H1 (cell line): ENCODE measurements at regions of chr22 and their contacts with region 1.

Region 1: DNA sequence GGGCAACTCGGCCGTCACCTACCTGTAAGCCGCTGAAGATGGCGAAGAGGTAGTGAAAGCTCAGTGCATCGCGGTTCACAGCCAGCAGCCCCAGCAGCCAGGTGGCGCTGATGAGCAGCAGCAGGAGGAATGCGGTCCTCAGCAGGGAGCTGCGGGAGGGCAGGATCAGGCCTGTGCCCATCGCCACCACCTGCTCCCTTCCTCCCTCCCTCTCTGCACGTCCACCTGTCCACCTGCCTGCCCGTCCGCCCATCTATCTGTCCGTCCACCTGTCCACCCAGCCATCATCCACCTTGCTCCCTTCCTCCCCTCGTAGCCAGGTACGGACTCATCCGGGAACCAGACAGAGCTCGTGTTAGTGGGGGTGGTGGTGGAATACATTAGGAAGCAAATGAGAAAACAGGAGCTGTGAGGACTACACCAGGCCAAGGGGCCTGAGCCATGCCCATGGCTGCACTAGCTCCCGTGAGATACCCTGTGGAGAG is 32.2 kb downstream of the TRMU start:
- DNase-seq: peak; percentile 61 to 96
- H3K4me3 ChIP-seq: no peak overlapping the region
- H3K27ac ChIP-seq: no peak overlapping the region
- H3K4me1 ChIP-seq: peaks cover 0 to 15% (median 6%) of the 10 kb centered on the region in 4 experiments; a peak in 5 of 7 replicates
- H3K27me3 ChIP-seq: no peaks in the 10 kb centered on the region
- CTCF ChIP-seq: peak; percentile 94 to 100 (median 100)
- EP300 ChIP-seq: peak in 1 of 2 experiments; percentile 49; a peak in 1 of 3 replicates
- POLR2A ChIP-seq: no peak
- RAD21 ChIP-seq: peak; percentile 85 to 88

Region 2: GRCh38 chr22:46233231-46233630 is 134.5 kb before region 1 on chr22:
- CTCF ChIA-PET with region 1: no interaction called
- POLR2A ChIA-PET with region 1: no interaction called
- DNase-seq: no peak
- H3K4me3 ChIP-seq: no peak overlapping the region
- H3K27ac ChIP-seq: no peak overlapping the region
- H3K4me1 ChIP-seq: no peaks in the 10 kb centered on the region
- H3K27me3 ChIP-seq: no peaks in the 10 kb centered on the region
- CTCF ChIP-seq: no peak
- EP300 ChIP-seq: no peak
- POLR2A ChIP-seq: no peak
- RAD21 ChIP-seq: no peak

Region 3: GRCh38 chr22:46296257-46297150 is 71.2 kb before region 1 on chr22 and contains the start of gene GTSE1:
- CTCF ChIA-PET with region 1: no interaction called
- POLR2A ChIA-PET with region 1: no interaction called
- DNase-seq: peak; percentile 93 to 96
- H3K4me3 ChIP-seq: peak within 1 kb of the TSS; percentile 60 to 87 (median 76)
- H3K27ac ChIP-seq: no peak within 1 kb of the TSS; the same call in 1 of the 2 replicates
- H3K4me1 ChIP-seq: peaks cover 4 to 11% (median 5%) of the 10 kb centered on the region in 4 experiments; a peak in 4 of 7 replicates
- H3K27me3 ChIP-seq: no peaks in the 10 kb centered on the region
- CTCF ChIP-seq: peak in 2 of 3 experiments; percentile 1 to 7; a peak in 2 of 4 replicates
- EP300 ChIP-seq: no peak
- POLR2A ChIP-seq: no peak
- RAD21 ChIP-seq: peak; percentile 25 to 32; a peak in 3 of 4 replicates
- total RNA-seq, gene GTSE1: 38.6 and 40.6 TPM in 2 replicates

Region 4: DNA sequence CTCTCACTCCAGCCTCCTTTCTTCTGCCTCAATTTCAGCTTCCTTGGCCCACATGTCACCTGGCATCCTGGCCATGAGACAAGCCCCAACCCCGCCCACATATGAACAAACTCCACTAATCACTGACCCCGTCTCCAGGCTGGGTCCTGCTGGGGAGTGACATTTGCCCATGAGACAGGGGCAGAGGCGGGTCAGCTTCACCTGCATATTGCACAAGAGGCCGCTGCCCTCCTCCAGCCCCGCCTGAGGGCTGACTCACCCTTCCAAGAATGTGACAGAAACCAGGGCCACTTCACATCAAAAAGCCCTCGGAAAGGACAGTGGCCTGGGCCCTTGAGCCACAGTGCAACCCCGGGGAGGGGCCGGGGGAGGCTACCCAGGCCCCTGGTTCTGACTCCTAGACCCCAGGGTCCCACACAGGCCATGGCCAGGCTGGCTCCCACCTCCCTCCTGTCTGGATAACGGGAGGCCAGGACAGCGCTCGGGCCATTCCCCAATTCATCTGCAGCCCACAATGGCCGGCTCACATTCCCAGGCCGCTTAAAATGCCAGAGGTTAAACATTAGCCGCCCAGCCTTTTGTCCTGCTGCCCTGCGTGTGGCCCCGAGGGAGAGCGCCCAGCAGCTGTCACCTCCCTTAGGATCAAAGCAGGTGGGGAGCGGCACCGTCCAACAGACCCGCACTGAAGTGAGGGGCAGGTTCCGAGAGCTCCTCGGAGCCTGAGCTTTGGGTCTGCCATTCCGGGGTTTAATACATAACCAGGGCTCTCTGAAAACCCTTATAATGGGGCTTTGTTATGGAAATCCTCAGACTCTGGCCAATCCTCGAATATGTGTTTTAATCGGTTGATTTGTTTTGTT is 10.0 kb after region 1 on chr22:
- CTCF ChIA-PET with region 1: interaction called, 16 read pairs
- POLR2A ChIA-PET with region 1: no interaction called
- DNase-seq: peak; percentile 27 to 73
- H3K4me3 ChIP-seq: peak overlapping the region in 1 of 4 experiments; percentile 38; a peak in 4 of 8 replicates
- H3K27ac ChIP-seq: 0 out of 2 replicates have a peak overlapping the region, but pooled peaks have one; percentile 14
- H3K4me1 ChIP-seq: peaks cover 0 to 30% (median 27%) of the 10 kb centered on the region in 4 experiments; a peak in 6 of 7 replicates
- H3K27me3 ChIP-seq: no peaks in the 10 kb centered on the region
- CTCF ChIP-seq: no peak
- EP300 ChIP-seq: no peak
- POLR2A ChIP-seq: no peak
- RAD21 ChIP-seq: 0 out of 4 replicates have a peak, but pooled peaks of 1 of the 2 experiments have one; percentile 4

Region 5: DNA sequence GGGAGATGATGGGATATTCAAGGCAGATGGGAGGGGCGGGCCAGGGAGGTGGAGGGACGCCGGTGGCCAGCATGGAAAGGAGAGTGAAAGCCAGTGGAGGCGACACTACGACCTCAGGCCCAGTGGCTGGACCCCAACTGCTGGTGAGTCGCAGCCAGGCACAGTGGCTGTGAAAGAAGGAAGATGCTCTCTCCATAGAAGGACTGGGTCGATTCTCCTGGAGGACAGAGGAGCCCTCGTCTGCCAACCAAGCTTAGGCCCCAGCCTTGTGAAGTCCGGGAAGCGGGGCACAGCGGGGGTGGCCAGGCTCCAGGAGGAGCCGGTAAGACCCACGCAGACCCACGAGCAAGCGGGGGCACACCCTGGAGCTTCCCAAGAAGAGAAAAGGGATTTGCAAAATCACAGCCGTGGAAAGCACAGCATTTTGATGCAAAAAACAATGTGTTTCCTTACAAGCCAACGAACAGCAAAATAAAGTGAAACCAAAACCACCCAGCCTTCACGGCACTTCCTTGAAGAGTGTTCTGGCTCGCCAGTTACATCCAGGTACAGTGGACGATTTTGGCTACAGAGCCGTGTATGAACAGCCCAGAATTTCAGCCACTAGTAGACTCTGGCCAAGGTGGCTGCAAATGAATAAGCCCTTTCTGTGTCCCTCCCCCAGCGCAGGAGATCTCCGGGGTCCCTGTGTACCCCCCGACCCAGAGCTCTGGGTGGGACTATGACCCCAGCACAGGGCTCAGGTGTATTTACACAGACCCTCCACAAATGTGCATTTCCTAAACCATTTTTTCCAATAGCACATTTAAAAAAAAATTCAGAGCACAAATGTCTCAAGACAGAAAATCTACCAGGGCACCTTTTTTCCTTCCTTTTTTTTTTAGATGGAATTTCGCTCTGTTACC is 64.7 kb after region 1 on chr22:
- CTCF ChIA-PET with region 1: interaction called, 14 read pairs
- POLR2A ChIA-PET with region 1: no interaction called
- DNase-seq: peak in 1 of 2 experiments; percentile 43
- H3K4me3 ChIP-seq: no peak overlapping the region
- H3K27ac ChIP-seq: no peak overlapping the region; the same call in 1 of the 2 replicates
- H3K4me1 ChIP-seq: no peaks in the 10 kb centered on the region
- H3K27me3 ChIP-seq: no peaks in the 10 kb centered on the region
- CTCF ChIP-seq: no peak
- EP300 ChIP-seq: no peak
- POLR2A ChIP-seq: no peak
- RAD21 ChIP-seq: no peak

Region 6: DNA sequence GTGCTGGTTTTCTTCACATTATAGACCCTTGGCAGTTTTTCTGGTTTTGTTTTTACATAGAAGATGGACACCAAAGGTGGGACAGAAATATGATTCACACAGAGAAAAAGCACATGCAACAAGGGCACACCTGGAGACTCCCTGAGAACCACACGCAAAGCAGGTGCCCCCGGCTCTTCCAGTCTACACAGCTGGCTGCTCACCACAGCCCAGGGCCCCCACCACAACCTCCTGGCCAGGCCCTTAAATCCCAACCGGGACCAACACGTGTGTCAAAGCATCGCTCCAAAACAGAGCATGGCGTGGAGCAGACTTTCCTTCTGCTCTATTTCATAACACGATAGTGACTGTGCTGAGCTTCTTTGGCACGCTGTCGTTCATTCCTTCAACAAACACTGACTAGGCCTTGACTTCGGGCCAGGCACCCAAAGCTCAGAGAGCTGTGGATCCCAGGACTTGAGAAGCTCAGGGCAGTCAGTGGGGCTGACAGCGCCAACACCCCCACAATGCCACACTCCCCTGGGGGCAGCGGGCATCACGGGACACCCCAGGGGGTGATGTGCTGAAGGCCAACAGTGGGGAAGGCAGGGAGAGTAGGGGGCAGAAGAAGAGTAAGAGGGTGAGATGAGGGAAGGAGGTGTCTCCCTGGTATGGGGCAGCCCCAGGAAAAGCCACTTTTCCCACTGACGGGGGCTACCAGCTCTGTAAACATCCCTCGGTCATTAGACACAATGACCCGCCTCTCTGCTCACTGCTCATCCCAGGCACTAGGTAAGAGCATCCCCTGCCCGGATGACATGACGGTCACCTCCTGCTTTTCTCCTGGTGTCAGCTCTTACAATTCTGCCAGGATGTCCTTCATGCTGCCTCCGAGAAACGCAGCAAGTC is 143.6 kb after region 1 on chr22:
- CTCF ChIA-PET with region 1: interaction called, 10 read pairs
- POLR2A ChIA-PET with region 1: no interaction called
- DNase-seq: no peak
- H3K4me3 ChIP-seq: no peak overlapping the region
- H3K27ac ChIP-seq: no peak overlapping the region
- H3K4me1 ChIP-seq: peaks cover 0 to 36% (median 21%) of the 10 kb centered on the region in 4 experiments; a peak in 6 of 7 replicates
- H3K27me3 ChIP-seq: no peaks in the 10 kb centered on the region
- CTCF ChIP-seq: no peak
- EP300 ChIP-seq: no peak
- POLR2A ChIP-seq: no peak
- RAD21 ChIP-seq: no peak

Region 7: DNA sequence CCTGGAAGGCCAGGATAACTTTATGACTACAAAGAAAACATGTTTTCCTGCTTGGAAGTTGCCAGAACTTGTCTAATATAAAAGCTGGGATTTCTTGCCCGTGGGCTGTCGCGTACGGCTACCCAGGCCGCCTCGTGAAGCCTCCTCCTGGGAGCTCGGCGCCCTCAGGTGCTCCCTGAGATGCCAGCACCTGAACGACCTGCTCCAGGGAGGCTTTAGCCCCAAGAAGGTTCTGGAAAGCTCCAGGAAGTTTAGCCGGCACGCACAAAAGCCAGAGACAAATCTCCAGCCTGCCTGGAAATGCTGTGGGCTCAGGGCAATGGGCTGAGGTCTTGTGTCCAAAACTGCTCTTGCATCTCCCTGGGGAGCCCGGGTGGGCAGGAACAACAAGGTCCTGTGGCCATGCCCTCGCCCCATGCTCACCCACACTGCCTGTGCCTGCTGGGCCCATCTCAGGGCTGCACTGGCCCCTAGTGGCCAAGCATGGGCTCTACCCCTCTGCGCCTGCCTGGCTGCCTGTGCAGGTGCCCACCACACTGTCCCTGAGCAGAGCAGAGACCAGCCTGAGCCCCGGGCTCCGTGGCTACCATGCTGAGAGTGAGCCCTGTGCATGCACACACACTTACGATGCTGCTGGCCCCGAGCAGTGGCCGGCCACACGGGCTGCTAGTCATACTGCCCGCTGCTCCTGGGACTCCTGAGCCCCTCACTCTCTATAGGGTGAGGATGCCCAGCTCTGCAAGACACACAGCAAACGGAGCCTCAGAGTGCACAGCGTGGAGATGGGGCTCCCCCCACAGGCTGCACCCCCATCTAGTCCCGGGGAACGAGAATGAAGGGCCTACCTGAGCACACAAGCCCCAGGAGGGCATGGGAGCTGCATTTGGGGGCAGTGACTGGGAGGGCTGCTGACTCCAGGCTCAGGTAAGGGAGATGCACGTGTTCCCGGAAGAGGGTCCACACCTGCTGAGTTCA is 174.5 kb after region 1 on chr22:
- CTCF ChIA-PET with region 1: interaction called, 82 read pairs
- POLR2A ChIA-PET with region 1: interaction called, 9 read pairs
- DNase-seq: peak in 1 of 2 experiments; percentile 90
- H3K4me3 ChIP-seq: no peak overlapping the region
- H3K27ac ChIP-seq: no peak overlapping the region
- H3K4me1 ChIP-seq: peaks cover 0 to 6% (median 2%) of the 10 kb centered on the region in 4 experiments; a peak in 4 of 7 replicates
- H3K27me3 ChIP-seq: peaks cover 4 to 21% (median 20%) of the 10 kb centered on the region in 4 experiments
- CTCF ChIP-seq: peak; percentile 97 to 100 (median 99)
- EP300 ChIP-seq: no peak
- POLR2A ChIP-seq: no peak
- RAD21 ChIP-seq: peak; percentile 98 to 99